PC-3 (cell line): ENCODE measurements at regions of chr21 and their contacts with region 1.

Region 1: GRCh38 chr21:34936371-34936789 is 112.7 kb downstream of the RUNX1 start:
- DNase-seq: no peak
- ATAC-seq: peak; percentile 25; the same call in 1 of the 2 replicates
- H3K4me3 ChIP-seq: no peak overlapping the region
- H3K27ac ChIP-seq: peak overlapping the region; percentile 15
- H3K4me1 ChIP-seq: peaks cover 43% of the 10 kb centered on the region
- H3K27me3 ChIP-seq: no peaks in the 10 kb centered on the region
- CTCF ChIP-seq: no peak

Region 2: DNA sequence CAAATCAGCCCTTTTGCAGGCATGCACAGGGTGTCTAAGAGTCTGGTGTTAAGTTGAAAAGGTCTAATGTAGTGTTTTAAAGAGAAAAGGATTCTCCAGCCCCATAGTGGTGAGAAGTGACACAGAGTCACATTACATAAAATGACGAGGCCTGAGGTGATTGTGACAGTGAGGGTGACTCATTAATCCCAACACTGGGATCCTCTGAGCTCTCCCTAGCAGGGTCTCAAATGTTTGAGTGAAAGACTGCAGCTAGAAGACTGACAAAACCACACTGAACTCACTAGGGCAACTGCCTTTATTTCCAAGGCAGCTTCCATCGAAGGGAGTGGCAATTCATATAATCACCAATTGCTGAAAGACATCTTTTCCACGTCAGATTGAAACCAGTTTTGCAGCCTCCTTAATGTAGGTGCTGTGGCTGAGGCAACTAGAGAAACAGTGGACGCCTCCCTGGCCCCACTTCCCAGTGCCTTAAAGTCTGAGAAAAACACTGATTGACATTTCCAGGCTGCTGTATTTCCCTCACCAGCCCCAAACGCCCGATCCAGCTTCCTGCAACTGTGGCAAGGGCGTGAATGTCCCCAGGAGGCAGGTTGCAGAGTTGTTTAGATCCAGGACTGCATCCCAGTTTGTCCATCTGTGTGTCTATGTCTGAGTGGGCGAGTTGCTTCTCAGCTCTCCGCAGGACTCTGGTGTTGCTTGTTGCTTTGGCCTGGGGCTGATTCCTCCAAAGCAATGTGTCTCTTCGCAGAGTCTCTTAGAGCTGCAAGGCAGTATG is 31.3 kb after region 1 on chr21:
- CTCF ChIA-PET with region 1: no interaction called
- POLR2A ChIA-PET with region 1: no interaction called
- intact Hi-C with region 1: loop called (anchors 1 kb)
- DNase-seq: peak; percentile 88
- ATAC-seq: peak; percentile 55
- H3K4me3 ChIP-seq: no peak overlapping the region
- H3K27ac ChIP-seq: peak overlapping the region; percentile 85
- H3K4me1 ChIP-seq: peaks cover 42% of the 10 kb centered on the region
- H3K27me3 ChIP-seq: no peaks in the 10 kb centered on the region
- CTCF ChIP-seq: no peak

Region 3: GRCh38 chr21:34983680-34984086 is 47.3 kb after region 1 on chr21:
- CTCF ChIA-PET with region 1: interaction called, 5 read pairs
- POLR2A ChIA-PET with region 1: no interaction called
- intact Hi-C with region 1: loop called (anchors 5 kb)
- DNase-seq: peak; percentile 65
- ATAC-seq: peak; percentile 33
- H3K4me3 ChIP-seq: peak overlapping the region; percentile 29
- H3K27ac ChIP-seq: peak overlapping the region; percentile 91
- H3K4me1 ChIP-seq: peaks cover 36% of the 10 kb centered on the region
- H3K27me3 ChIP-seq: no peaks in the 10 kb centered on the region
- CTCF ChIP-seq: no peak

Region 4: DNA sequence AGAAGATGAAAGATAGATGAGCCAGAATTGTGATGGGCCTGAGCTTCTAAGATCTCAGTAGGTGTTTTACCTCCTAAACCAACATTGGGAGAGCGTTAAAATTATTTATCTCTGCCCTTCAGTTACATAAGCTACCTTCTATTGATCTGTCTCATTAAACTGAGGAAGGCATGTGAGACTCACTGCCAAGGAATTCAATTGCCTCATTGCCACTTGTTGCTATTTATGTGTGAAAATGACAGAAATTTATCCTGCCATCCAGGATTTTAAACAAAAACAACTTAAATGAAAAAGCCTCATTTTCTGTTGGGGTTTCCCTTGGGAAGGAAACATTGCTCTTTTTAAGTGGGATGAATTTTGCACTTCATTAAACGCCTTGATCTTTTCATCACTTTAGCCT is 191.5 kb after region 1 on chr21:
- CTCF ChIA-PET with region 1: no interaction called
- POLR2A ChIA-PET with region 1: no interaction called
- intact Hi-C with region 1: no loop called
- DNase-seq: peak; percentile 31
- ATAC-seq: no peak
- H3K4me3 ChIP-seq: no peak overlapping the region
- H3K27ac ChIP-seq: no peak overlapping the region
- H3K4me1 ChIP-seq: 0 out of 2 replicates have a peak, but pooled peaks cover 3% of the 10 kb centered on the region
- H3K27me3 ChIP-seq: no peaks in the 10 kb centered on the region
- CTCF ChIP-seq: no peak

Region 5: DNA sequence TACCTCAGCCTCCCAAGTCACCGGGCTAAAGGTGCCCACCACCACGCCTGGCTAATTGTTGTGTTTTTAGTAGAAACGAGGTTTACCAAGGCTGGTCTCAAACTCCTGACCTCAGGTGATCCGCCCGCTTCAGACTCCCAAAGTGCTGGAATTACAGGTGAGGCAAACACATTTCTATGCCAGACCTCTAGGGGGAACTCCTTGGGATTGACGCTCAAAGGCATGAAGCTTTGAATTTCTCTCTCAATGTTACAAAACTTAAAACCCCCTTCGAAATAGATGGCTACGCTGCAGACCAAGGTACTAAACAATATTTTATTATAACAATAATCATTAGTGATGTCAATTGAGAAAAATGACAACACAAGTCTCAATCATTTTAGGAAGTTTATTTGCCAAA is 793.9 kb after region 1 on chr21:
- CTCF ChIA-PET with region 1: no interaction called
- POLR2A ChIA-PET with region 1: interaction called, 11 read pairs
- intact Hi-C with region 1: no loop called
- DNase-seq: no peak
- ATAC-seq: no peak
- H3K4me3 ChIP-seq: no peak overlapping the region
- H3K27ac ChIP-seq: no peak overlapping the region
- H3K4me1 ChIP-seq: no peaks in the 10 kb centered on the region; the same call in 1 of the 2 replicates
- H3K27me3 ChIP-seq: no peaks in the 10 kb centered on the region
- CTCF ChIP-seq: peak; percentile 33; the same call in 1 of the 2 replicates

Region 6: DNA sequence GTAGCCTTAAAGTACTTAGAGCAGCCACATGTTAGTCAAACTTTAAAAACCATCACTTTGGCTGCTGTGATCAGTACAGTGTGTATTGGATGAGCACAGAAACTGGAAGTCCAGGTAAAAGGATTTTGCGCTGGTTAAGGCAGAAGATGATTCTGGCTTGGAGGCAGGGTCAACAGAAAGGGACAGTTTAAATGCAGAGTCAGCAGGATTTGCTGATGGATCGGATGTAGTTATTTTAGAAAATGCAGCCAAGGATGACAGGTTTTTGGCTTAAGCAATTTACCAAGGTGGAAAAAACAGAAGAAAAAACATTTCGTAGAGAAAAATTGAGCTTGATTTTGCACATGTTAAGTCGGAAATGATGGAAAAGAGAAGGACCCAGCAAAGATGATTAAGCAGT is 1337.7 kb after region 1 on chr21:
- CTCF ChIA-PET with region 1: no interaction called
- POLR2A ChIA-PET with region 1: no interaction called
- intact Hi-C with region 1: no loop called
- DNase-seq: no peak
- ATAC-seq: no peak
- H3K4me3 ChIP-seq: no peak overlapping the region
- H3K27ac ChIP-seq: no peak overlapping the region
- H3K4me1 ChIP-seq: no peaks in the 10 kb centered on the region
- H3K27me3 ChIP-seq: no peaks in the 10 kb centered on the region
- CTCF ChIP-seq: no peak